Activated naive CD4-positive, alpha-beta T cell treated with anti-CD3 and anti-CD28 coated beads for 36 hours (primary cell): ENCODE measurements at regions of chr1 and their contacts with region 1.

Region 1: GRCh38 chr1:160629286-160630210 is 17.3 kb downstream of the SLAMF1 start:
- DNase-seq: peak; percentile 91
- H3K4me3 Mint-ChIP-seq: peak overlapping the region; percentile 66
- H3K27ac Mint-ChIP-seq: peak overlapping the region; percentile 96
- H3K4me1 Mint-ChIP-seq: peaks cover 95% of the 10 kb centered on the region
- H3K27me3 Mint-ChIP-seq: no peaks in the 10 kb centered on the region

Region 2: DNA sequence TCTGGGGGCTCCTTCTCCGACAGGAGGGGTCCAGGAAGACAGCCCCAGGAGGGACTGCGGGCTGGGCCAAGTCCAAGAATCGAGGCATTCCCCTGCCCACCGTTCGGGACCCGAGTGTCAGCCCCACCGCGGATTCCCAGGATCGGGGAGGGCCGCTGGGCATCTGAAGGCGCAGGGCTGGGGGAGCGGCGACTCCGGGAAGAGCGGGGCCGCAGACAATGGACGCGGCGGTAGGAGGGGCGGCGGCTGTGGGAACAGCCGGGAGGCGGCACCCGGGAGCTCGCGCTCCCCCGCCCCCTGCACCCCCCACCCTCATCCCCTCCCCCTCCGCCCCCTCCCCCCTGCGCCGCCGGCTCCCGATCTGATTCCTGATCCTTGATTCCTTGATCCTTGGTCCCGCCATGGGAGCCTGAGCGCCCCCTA is 229.3 kb before region 1 on chr1 and contains the start of gene VANGL2:
- CTCF ChIA-PET with region 1: no interaction called
- intact Hi-C with region 1: no loop called
- DNase-seq: peak; percentile 31
- H3K4me3 Mint-ChIP-seq: peak within 1 kb of the TSS; percentile 44
- H3K27ac Mint-ChIP-seq: no peak within 1 kb of the TSS
- H3K4me1 Mint-ChIP-seq: peaks cover 3% of the 10 kb centered on the region
- H3K27me3 Mint-ChIP-seq: peaks cover 13% of the 10 kb centered on the region
- total RNA-seq, gene VANGL2: 0.27 TPM in 1 of 2 experiments, not detected in the other

Region 3: GRCh38 chr1:160451119-160451858 is 178.3 kb before region 1 on chr1:
- CTCF ChIA-PET with region 1: no interaction called
- intact Hi-C with region 1: loop called (anchors 1 kb)
- DNase-seq: no peak
- H3K4me3 Mint-ChIP-seq: peak overlapping the region; percentile 56
- H3K27ac Mint-ChIP-seq: peak overlapping the region; percentile 93
- H3K4me1 Mint-ChIP-seq: peaks cover 76% of the 10 kb centered on the region
- H3K27me3 Mint-ChIP-seq: no peaks in the 10 kb centered on the region

Region 4: DNA sequence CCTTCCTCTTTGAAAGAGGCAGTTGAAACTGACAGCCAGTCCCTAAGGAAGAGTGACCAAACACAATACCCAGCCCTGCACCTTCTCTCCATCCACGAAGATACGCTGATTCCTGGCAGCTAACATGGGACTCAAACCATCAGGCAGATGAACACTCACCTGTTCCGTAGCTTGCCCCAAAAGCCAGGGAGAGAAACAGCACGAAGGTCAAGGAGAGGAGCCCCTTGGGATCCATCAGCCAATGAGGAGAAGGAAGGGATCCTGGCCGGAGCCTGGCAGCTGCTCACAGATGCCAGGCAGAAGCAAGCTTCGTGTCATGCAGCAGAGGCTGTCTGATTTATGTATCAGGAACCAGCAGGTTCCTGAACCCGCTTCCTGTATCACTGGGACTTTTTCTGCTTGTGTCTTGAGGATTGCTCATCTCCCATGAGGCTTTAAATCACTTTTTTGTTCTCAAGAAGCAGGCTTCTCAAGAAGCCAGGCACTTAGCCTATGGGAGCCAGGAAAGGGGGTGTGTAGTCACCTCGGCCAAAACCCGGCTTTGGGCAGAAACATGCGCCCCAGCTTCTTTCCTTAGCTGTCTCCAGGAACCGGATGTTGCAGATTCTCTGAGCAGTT is 17.3 kb after region 1 on chr1 and contains the start of gene SLAMF1:
- CTCF ChIA-PET with region 1: interaction called, 14 read pairs
- intact Hi-C with region 1: loop called (anchors 1 kb)
- DNase-seq: peak; percentile 84
- H3K4me3 Mint-ChIP-seq: peak within 1 kb of the TSS; percentile 99
- H3K27ac Mint-ChIP-seq: peak within 1 kb of the TSS; percentile 99
- H3K4me1 Mint-ChIP-seq: peaks cover 49% of the 10 kb centered on the region
- H3K27me3 Mint-ChIP-seq: no peaks in the 10 kb centered on the region
- total RNA-seq, gene SLAMF1: 101 to 112 TPM

Region 5: GRCh38 chr1:160664573-160665051 is 35.1 kb after region 1 on chr1:
- CTCF ChIA-PET with region 1: interaction called, 4 read pairs
- intact Hi-C with region 1: loop called (anchors 2 kb)
- DNase-seq: peak; percentile 77
- H3K4me3 Mint-ChIP-seq: peak overlapping the region; percentile 54
- H3K27ac Mint-ChIP-seq: peak overlapping the region; percentile 93
- H3K4me1 Mint-ChIP-seq: peaks cover 72% of the 10 kb centered on the region
- H3K27me3 Mint-ChIP-seq: no peaks in the 10 kb centered on the region

Region 6: GRCh38 chr1:160768295-160768657 is 138.7 kb after region 1 on chr1:
- CTCF ChIA-PET with region 1: no interaction called
- intact Hi-C with region 1: no loop called
- DNase-seq: peak; percentile 96
- H3K4me3 Mint-ChIP-seq: peak overlapping the region; percentile 79
- H3K27ac Mint-ChIP-seq: peak overlapping the region; percentile 99
- H3K4me1 Mint-ChIP-seq: peaks cover 68% of the 10 kb centered on the region
- H3K27me3 Mint-ChIP-seq: no peaks in the 10 kb centered on the region

Region 7: GRCh38 chr1:161258439-161259344 is 629.1 kb after region 1 on chr1 and contains the start of gene PCP4L1:
- CTCF ChIA-PET with region 1: no interaction called
- intact Hi-C with region 1: no loop called
- DNase-seq: peak; percentile 50
- H3K4me3 Mint-ChIP-seq: peak within 1 kb of the TSS; percentile 58
- H3K27ac Mint-ChIP-seq: no peak within 1 kb of the TSS
- H3K4me1 Mint-ChIP-seq: peaks cover 9% of the 10 kb centered on the region
- H3K27me3 Mint-ChIP-seq: peaks cover 47% of the 10 kb centered on the region
- total RNA-seq, gene PCP4L1: 0.24 to 0.37 TPM